ENCODE measurements at regions of chr7 and their contacts with region 1.

Region 1: GRCh38 chr7:49166441-49166840 is 242.1 kb downstream of the CDC14C start:
- DNase-seq: no peak
- ATAC-seq: no peak
- H3K4me3 ChIP-seq: no peak overlapping the region
- H3K27ac ChIP-seq: no peak overlapping the region
- H3K4me1 ChIP-seq: no peaks in the 10 kb centered on the region
- H3K27me3 ChIP-seq: no peaks in the 10 kb centered on the region
- CTCF ChIP-seq: no peak
- EP300 ChIP-seq: no peak
- POLR2A ChIP-seq: no peak
- RAD21 ChIP-seq: no peak

Region 2: GRCh38 chr7:48299580-48300169 is 866.8 kb before region 1 on chr7:
- CTCF ChIA-PET with region 1: no interaction called
- POLR2A ChIA-PET with region 1: no interaction called
- in situ Hi-C with region 1: no loop called
- intact Hi-C with region 1: loop called (anchors 5 kb)
- DNase-seq: peak; percentile 47
- ATAC-seq: peak; percentile 98
- H3K4me3 ChIP-seq: no peak overlapping the region
- H3K27ac ChIP-seq: no peak overlapping the region
- H3K4me1 ChIP-seq: no peaks in the 10 kb centered on the region
- H3K27me3 ChIP-seq: no peaks in the 10 kb centered on the region
- CTCF ChIP-seq: peak; percentile 79
- EP300 ChIP-seq: no peak
- POLR2A ChIP-seq: no peak
- RAD21 ChIP-seq: peak; percentile 38; the same call in 1 of the 2 replicates

Region 3: DNA sequence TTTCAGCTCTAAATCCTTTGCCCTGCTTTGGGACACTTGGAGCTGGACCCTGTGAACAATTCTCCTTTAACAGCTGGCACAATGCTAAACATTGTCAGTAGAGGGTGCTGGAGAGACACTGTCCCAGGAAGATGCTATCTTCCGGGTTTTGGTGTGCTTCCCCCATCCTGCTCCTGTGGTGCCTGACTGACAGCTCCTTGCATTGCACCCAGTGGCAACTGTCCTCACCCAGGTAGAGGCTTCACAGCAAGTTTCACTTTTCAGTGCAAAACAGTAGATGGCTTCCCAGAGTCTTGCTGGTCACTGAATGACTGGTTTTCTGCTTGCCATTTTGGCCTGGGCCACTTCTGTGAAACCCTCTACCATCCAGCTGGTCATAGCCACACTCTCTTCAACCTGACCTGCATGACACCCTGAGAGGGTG is 164.8 kb before region 1 on chr7:
- CTCF ChIA-PET with region 1: no interaction called
- POLR2A ChIA-PET with region 1: no interaction called
- in situ Hi-C with region 1: no loop called
- intact Hi-C with region 1: loop called (anchors 1 kb)
- DNase-seq: peak; percentile 20
- ATAC-seq: peak; percentile 82
- H3K4me3 ChIP-seq: no peak overlapping the region
- H3K27ac ChIP-seq: no peak overlapping the region
- H3K4me1 ChIP-seq: no peaks in the 10 kb centered on the region
- H3K27me3 ChIP-seq: no peaks in the 10 kb centered on the region
- CTCF ChIP-seq: peak; percentile 73
- EP300 ChIP-seq: no peak
- POLR2A ChIP-seq: no peak
- RAD21 ChIP-seq: no peak

Region 4: DNA sequence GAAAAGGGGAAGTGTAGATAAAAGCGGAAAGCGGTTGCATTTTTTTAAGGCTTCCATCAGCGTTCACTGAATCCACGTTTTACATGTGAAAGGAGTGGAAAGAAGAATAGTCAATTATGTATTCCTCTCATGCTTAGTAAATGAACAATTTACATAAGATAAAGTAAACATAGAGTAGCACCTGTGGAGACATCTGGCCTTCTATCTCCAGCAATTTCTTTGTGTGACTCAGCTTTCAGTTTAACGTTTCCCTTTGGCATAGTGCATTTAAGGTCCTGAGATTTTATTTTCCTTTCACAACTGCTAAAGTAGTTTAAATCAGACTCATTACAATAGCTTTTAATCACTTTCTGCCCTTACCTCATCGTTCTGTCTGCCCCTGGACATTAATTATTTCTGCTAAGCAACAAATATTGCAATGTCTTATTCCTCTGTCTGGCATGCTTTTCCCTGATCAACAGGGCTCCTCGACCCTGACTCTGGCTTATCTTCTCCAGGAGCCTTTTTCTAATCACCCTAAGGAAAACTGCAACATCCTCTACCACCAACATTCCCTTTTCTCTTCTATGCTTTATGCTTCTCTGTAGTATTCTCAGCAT is 223.5 kb after region 1 on chr7:
- CTCF ChIA-PET with region 1: no interaction called
- POLR2A ChIA-PET with region 1: no interaction called
- in situ Hi-C with region 1: no loop called
- intact Hi-C with region 1: no loop called
- DNase-seq: no peak
- ATAC-seq: no peak
- H3K4me3 ChIP-seq: no peak overlapping the region
- H3K27ac ChIP-seq: no peak overlapping the region
- H3K4me1 ChIP-seq: no peaks in the 10 kb centered on the region
- H3K27me3 ChIP-seq: no peaks in the 10 kb centered on the region
- CTCF ChIP-seq: no peak
- EP300 ChIP-seq: no peak
- POLR2A ChIP-seq: no peak
- RAD21 ChIP-seq: no peak

Region 5: GRCh38 chr7:49418963-49419362 is 252.5 kb after region 1 on chr7:
- CTCF ChIA-PET with region 1: no interaction called
- POLR2A ChIA-PET with region 1: no interaction called
- in situ Hi-C with region 1: no loop called
- intact Hi-C with region 1: no loop called
- DNase-seq: no peak
- ATAC-seq: no peak
- H3K4me3 ChIP-seq: no peak overlapping the region
- H3K27ac ChIP-seq: no peak overlapping the region
- H3K4me1 ChIP-seq: no peaks in the 10 kb centered on the region
- H3K27me3 ChIP-seq: no peaks in the 10 kb centered on the region
- CTCF ChIP-seq: no peak
- EP300 ChIP-seq: no peak
- POLR2A ChIP-seq: no peak
- RAD21 ChIP-seq: no peak

Measured in HepG2 (cell line).